ENCODE measurements at regions of chr22 and their contacts with region 1.

Region 1: GRCh38 chr22:42437488-42438292 is 5.5 kb upstream of the NFAM1 start:
- DNase-seq: peak; percentile 60 to 83 (median 70)
- H3K4me3 ChIP-seq: peak overlapping the region; percentile 9 to 71 (median 56)
- H3K27ac ChIP-seq: peak overlapping the region in 7 of 59 donors; percentile 7 to 81 (median 53)
- H3K27me3 ChIP-seq: no peaks in the 10 kb centered on the region
- CTCF ChIP-seq: peak; percentile 94 to 99 (median 98)

Region 2: GRCh38 chr22:42090596-42091454 is 346.9 kb before region 1 on chr22 and contains the start of gene NDUFA6:
- intact Hi-C with region 1: loop called (anchors 2 to 5 kb)
- DNase-seq: peak; percentile 99
- H3K4me3 ChIP-seq: peak within 1 kb of the TSS; percentile 66 to 99 (median 92)
- H3K27ac ChIP-seq: peak within 1 kb of the TSS; percentile 73 to 99 (median 94)
- H3K27me3 ChIP-seq: no peaks in the 10 kb centered on the region
- CTCF ChIP-seq: peak; percentile 74 to 99 (median 96)
- total RNA-seq, gene NDUFA6: 33.6 to 81.3 (median 55.8) TPM

Region 3: GRCh38 chr22:42169055-42169469 is 268.6 kb before region 1 on chr22:
- intact Hi-C with region 1: loop called (anchors 1 to 2 kb)
- DNase-seq: peak; percentile 62 to 91 (median 76)
- H3K4me3 ChIP-seq: no peak overlapping the region
- H3K27ac ChIP-seq: peak overlapping the region in 17 of 59 donors; percentile 2 to 86 (median 29)
- H3K27me3 ChIP-seq: no peaks in the 10 kb centered on the region
- CTCF ChIP-seq: peak; percentile 74 to 100 (median 95)

Region 4: GRCh38 chr22:42277988-42278776 is 159.5 kb before region 1 on chr22:
- intact Hi-C with region 1: loop called (anchors 2 to 5 kb)
- DNase-seq: peak in 7 of 10 donors; percentile 57 to 83 (median 63)
- H3K4me3 ChIP-seq: no peak overlapping the region
- H3K27ac ChIP-seq: peak overlapping the region in 5 of 59 donors; percentile 3 to 58 (median 30)
- H3K27me3 ChIP-seq: no peaks in the 10 kb centered on the region
- CTCF ChIP-seq: peak in 53 of 56 donors; percentile 14 to 60 (median 37)

Region 5: DNA sequence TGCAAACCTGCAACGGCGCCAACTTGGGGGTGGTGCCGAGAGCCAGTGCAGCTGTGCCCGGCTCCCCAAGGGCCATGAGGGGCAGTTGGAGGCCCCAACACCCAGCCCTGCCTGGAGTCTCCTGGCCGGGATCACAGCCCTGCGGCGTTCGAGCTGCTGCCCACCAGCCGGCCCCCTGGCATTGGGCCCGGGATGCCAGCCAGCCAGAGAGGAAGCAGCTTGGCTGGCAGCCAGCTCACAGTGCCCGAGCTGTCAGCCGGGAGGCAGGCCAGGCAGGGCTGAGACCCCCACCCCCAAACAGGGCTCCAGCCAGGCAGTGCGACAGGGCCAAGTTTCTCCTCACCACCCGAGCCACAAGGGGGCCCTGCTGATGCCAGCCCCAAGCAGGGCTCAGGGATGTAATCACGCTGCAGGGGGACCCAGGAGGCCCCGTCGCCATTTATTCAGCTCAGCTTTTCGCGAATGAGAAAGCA is 141.3 kb before region 1 on chr22:
- intact Hi-C with region 1: loop called in 1 of 2 experiments (anchors 5 kb)
- DNase-seq: peak; percentile 61 to 83 (median 68)
- H3K4me3 ChIP-seq: peak overlapping the region in 7 of 59 donors; percentile 2 to 15 (median 8)
- H3K27ac ChIP-seq: peak overlapping the region in 50 of 59 donors; percentile 12 to 79 (median 58)
- H3K27me3 ChIP-seq: no peaks in the 10 kb centered on the region
- CTCF ChIP-seq: peak in 53 of 56 donors; percentile 9 to 67 (median 49)

Region 6: DNA sequence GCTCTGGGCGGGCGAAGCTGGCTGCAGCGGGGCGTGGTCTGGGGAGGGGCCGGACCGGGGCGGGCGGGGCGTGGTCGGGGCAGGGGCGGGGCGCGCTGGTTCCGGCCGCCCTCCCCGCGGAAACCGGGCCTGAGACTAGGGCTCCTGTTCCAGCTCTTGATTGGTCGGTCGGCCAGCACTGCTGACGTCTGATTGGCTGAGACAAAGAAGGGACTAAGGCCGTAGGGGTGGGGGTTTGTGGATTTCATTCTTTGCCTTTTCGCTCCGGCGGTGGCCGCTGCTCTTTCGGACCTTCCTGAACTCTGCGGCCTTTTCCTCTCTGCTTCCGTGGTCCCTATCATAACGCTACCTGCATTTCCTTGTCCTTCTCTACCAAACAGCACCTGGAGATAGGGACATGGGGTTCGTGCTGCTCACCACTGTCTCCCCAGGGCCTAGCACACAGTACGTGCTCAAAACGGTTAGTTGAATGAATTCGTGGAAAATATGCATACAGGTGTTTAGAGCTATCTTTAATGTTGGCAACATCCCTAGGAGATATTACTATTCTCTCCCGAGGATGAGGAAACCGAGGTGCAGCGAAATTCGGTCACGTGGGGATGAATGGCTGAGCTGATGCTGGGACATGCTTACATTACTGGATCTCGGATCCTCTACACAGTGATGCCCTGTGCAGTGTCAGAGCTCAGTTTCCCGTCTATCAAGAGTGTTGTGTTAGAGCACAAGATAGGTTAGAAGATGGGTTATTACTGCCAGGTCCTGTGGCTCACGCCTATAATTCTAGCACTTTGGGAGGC is 68.2 kb before region 1 on chr22:
- intact Hi-C with region 1: loop called in 1 of 2 experiments (anchors 5 kb)
- DNase-seq: peak; percentile 95 to 98 (median 96)
- H3K4me3 ChIP-seq: peak overlapping the region; percentile 50 to 100 (median 77)
- H3K27ac ChIP-seq: peak overlapping the region in 44 of 59 donors; percentile 8 to 84 (median 60)
- H3K27me3 ChIP-seq: peaks cover 0 to 4% (median 0%) of the 10 kb centered on the region in 45 donors
- CTCF ChIP-seq: peak in 10 of 56 donors; percentile 10 to 33 (median 18)

Region 7: GRCh38 chr22:42473484-42474193 is 35.9 kb after region 1 on chr22:
- intact Hi-C with region 1: loop called in 1 of 2 experiments (anchors 5 kb)
- DNase-seq: no peak
- H3K4me3 ChIP-seq: no peak overlapping the region
- H3K27ac ChIP-seq: no peak overlapping the region
- H3K27me3 ChIP-seq: no peaks in the 10 kb centered on the region
- CTCF ChIP-seq: peak; percentile 28 to 72 (median 60)